SK-N-SH (cell line): ENCODE measurements at regions of chr1 and their contacts with region 1.

Region 1: DNA sequence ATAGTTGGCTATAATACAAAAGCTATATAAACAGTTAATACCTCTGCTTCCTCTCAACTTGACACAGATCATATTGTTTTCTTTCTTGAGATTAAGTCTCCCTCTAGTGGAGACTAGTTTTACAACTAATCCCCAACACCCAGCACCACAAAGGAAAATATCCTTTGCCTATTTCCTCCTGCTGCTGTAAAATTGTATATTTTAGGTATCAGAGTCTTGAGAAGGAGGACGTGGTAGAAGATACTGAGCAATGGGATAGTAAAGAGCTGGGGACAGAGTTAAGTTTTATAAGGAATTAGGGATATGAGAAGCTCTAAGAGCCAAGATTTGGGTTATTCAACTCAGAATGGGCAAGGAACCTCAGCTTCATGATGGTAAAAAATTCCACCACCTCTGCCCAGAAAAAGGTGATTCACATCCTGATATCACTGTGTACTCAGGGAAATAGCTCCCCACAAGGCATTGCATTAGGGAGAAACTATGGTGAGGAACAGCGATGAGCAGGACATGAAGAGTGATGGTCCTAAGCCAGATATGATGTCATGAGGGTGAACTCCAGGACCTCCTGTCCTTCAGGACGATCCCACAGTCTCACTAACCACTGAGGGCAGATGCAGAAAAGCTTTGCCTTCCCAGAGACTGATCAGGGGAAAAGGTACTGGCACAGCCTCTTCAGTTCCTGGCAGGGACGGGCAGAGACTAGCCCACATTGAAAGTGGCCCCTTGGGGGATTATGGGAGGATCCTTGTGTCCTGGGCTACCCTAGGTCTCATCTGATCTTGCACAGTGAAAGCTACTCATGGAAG is 14.7 kb upstream of the CFAP126 start:
- DNase-seq: peak; percentile 60
- H3K4me3 ChIP-seq: peak overlapping the region in 1 of 2 experiments; percentile 34; a peak in 2 of 4 replicates
- H3K27ac ChIP-seq: peak overlapping the region in 1 of 2 experiments; percentile 72; a peak in 2 of 4 replicates
- H3K4me1 ChIP-seq: no peaks in the 10 kb centered on the region; a peak in 1 of 4 replicates
- H3K27me3 ChIP-seq: no peaks in the 10 kb centered on the region
- CTCF ChIP-seq: peak; percentile 81
- EP300 ChIP-seq: no peak
- RAD21 ChIP-seq: peak; percentile 78

Region 2: DNA sequence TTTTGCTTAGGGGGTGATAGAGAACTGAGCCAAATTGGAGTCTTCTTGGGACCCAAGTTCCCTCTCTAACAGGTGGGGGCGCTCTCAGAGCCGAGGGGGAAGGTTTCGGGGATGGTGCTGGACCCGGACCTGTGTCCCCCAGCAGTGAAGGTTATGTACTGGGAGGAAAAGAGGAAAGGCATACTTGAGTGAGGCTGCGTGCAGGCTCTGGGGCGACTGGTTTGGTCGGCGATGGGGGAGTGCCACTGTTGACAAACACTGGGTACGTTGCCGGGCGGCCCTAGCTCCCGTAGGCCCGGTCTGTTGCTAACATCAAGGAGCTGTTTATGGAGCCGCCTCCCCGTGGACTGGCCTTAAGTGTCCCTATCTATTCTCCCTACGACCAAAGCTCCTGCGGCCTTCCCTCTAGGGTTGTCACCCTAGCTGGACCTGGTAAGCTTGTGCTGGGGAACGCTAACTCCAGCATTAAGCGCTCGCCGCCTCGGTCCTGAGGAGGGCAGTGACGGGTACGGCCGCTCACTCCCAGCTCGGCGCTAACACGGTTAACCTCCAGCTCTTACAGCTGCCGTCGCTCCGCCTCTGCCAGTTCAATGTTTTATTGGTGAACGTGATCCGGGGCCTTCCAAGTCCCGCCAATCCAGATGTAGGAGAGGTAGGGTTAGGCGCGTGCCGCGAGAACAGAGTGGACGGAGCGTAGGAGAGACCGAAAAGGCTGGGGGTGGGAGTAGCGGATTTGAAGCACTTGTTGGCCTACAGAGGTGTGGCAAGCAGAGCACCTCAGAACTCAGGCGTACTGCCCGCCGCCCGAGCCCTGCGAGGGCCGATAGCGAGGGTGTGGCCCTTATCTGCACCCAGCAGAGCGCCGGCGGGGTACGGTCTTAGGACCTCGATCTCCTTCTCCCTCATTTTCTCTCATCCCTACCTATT is 216.4 kb before region 1 on chr1 and contains the start of gene PPOX:
- CTCF ChIA-PET with region 1: interaction called, 10 read pairs
- POLR2A ChIA-PET with region 1: no interaction called
- DNase-seq: peak; percentile 90
- H3K4me3 ChIP-seq: peak within 1 kb of the TSS; percentile 80 to 90
- H3K27ac ChIP-seq: peak within 1 kb of the TSS; percentile 86 to 88
- H3K4me1 ChIP-seq: peaks cover 0 to 26% of the 10 kb centered on the region in 2 experiments; a peak in 1 of 4 replicates
- H3K27me3 ChIP-seq: no peaks in the 10 kb centered on the region
- CTCF ChIP-seq: peak; percentile 75
- EP300 ChIP-seq: no peak
- RAD21 ChIP-seq: no peak
- polyA plus RNA-seq, gene PPOX: 30.7 and 47.3 TPM in 2 replicates

Region 3: DNA sequence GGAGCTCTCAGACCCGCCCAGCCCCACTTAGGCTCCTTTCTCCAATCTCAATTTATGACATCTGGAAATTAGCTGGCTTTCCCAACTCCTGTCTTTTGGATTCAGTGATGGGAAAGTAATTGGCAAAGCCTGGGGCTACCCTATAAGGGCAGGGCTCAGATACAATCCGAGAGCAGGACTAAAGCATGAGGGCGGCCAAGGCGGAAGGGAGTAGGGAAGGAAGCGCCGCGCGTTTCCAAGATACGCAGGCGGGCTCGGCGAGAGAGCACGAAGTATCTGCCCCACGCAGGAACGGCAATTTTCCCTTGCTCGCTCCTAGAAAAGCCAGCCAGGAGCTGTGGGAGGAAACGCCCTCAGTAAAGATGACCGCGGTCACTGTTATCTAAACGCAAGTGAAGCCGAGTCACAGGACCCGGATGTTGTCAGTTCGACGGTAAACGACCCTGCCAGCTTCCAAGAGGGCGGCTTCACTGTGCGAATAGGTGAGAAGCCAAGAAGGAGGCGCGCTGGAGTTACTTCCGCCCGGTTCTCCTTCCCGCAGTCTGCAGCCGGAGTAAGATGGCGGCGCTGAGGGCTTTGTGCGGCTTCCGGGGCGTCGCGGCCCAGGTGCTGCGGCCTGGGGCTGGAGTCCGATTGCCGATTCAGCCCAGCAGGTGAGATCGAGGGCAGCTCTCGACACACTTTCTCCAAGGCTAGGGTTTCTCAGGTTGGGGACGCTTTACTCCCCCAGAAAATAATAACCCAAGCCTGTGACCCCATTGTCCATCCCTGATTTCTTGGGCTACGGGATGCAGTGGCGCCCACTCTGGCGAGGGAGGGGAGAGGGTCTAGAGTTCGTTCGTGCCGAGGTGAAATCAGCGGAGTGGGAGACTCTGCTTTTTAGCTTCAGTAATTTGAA is 180.3 kb before region 1 on chr1 and contains the start of gene NDUFS2:
- CTCF ChIA-PET with region 1: interaction called, 19 read pairs
- POLR2A ChIA-PET with region 1: no interaction called
- DNase-seq: peak; percentile 85
- H3K4me3 ChIP-seq: peak within 1 kb of the TSS; percentile 78 to 83
- H3K27ac ChIP-seq: peak within 1 kb of the TSS; percentile 74 to 99
- H3K4me1 ChIP-seq: peaks cover 27 to 56% of the 10 kb centered on the region in 2 experiments
- H3K27me3 ChIP-seq: no peaks in the 10 kb centered on the region
- CTCF ChIP-seq: peak; percentile 49
- EP300 ChIP-seq: no peak
- RAD21 ChIP-seq: no peak
- polyA plus RNA-seq, gene NDUFS2: 203 and 210 TPM in 2 replicates

Region 4: GRCh38 chr1:161216945-161217712 is 165.3 kb before region 1 on chr1:
- CTCF ChIA-PET with region 1: interaction called, 78 read pairs
- POLR2A ChIA-PET with region 1: no interaction called
- DNase-seq: no peak
- H3K4me3 ChIP-seq: no peak overlapping the region
- H3K27ac ChIP-seq: peak overlapping the region in 1 of 2 experiments; percentile 43; a peak in 2 of 4 replicates
- H3K4me1 ChIP-seq: no peaks in the 10 kb centered on the region; a peak in 1 of 4 replicates
- H3K27me3 ChIP-seq: no peaks in the 10 kb centered on the region
- CTCF ChIP-seq: no peak
- EP300 ChIP-seq: no peak
- RAD21 ChIP-seq: no peak

Region 5: DNA sequence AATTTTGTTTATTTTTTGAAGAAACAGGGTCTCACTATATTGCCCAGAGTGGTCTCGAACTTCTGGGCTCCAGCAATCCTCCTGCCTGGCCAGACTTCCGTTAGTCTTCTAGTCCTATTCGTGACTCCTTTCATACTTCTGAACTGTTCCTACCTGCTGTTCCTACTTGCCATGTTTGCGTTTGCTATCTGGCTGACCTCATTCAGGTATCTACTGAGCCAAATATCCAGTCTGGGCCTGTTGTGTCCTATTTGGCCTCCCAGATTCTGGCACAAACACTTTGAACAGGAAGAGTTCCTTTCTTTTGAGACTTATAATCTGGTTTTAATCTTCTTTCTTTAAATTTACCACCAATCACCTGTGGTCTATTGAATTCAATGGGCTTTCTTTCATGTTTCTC is 137.5 kb before region 1 on chr1:
- CTCF ChIA-PET with region 1: interaction called, 11 read pairs
- POLR2A ChIA-PET with region 1: no interaction called
- DNase-seq: no peak
- H3K4me3 ChIP-seq: no peak overlapping the region
- H3K27ac ChIP-seq: no peak overlapping the region
- H3K4me1 ChIP-seq: no peaks in the 10 kb centered on the region
- H3K27me3 ChIP-seq: no peaks in the 10 kb centered on the region; the same call in 1 of the 2 replicates
- CTCF ChIP-seq: no peak
- EP300 ChIP-seq: no peak
- RAD21 ChIP-seq: no peak

Region 6: DNA sequence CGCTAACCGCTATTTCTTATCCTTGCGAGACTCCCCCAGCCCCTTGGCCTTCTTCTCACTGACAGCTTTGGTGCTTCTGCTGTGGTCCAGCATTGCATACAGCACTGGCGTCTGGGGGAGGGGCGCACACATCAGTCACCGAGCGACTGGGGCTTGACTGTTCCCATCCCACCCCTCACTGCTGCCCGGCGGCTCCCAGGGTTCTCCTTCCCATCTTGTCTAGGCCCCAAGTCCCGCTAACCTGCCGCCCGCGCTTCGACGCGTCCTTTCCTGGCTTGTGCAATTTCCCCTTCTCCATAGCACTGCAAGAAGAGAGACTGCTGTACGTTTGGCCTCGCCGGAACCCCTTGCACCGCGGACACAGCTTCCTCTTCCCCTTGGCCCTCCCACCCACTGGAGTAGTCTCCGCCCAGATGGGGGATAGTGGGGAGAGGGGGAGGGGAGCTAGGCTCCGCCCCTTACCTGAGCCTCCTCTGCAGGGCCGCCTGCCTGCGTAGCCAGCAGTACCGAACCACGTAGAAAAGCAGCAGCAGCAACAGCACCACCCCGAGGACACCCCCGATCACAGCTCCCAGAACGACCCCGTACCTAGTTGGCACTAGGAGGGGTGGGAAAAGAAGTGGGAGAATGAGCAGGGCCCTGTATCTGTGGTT is 76.4 kb before region 1 on chr1:
- CTCF ChIA-PET with region 1: interaction called, 14 read pairs
- POLR2A ChIA-PET with region 1: no interaction called
- DNase-seq: peak; percentile 91
- H3K4me3 ChIP-seq: peak overlapping the region; percentile 71 to 79
- H3K27ac ChIP-seq: 0 out of 4 replicates have a peak overlapping the region, but pooled peaks of 1 of the 2 experiments have one; percentile 8
- H3K4me1 ChIP-seq: peaks cover 0 to 11% of the 10 kb centered on the region in 2 experiments; a peak in 2 of 4 replicates
- H3K27me3 ChIP-seq: no peaks in the 10 kb centered on the region
- CTCF ChIP-seq: peak; percentile 29
- EP300 ChIP-seq: no peak
- RAD21 ChIP-seq: peak; percentile 32

Region 7: DNA sequence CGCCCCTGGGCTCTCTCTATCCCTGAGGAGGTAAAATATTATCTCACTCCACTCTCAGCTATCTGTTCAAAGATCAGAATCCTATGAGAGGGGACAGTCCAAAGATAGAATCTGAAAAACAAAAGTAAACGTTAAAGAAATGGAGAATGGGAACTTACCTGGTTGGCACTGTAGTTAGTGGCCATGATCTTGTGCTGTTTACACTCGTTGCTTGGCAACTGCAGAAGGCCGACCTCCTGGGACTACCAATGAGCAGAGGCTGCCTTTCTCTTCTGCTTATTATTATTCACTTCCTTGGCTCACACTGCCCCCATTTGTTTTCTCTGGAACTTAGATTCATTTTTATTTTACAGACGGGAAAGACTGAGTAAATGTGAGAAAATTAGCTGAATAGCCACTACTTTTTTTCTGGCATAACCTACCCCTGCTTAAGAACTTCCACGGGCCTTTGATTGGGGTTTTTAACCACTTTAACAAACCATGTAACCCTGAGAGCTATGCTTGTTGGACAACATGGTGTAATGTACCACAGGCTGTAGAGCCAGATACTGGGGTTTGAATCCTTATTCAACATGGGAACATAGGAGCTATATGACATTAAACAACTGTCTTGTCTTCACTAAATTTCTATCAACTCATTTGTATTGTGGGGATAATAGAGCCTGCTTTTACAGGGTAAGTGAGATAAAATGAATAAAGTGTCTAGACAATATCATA is 14.6 kb before region 1 on chr1 and contains the start of gene CFAP126:
- CTCF ChIA-PET with region 1: interaction called, 22 read pairs
- POLR2A ChIA-PET with region 1: no interaction called
- DNase-seq: peak; percentile 57
- H3K4me3 ChIP-seq: no peak within 1 kb of the TSS
- H3K27ac ChIP-seq: peak within 1 kb of the TSS in 1 of 2 experiments; percentile 53; a peak in 2 of 4 replicates
- H3K4me1 ChIP-seq: 0 out of 4 replicates have a peak, but pooled peaks cover 0 to 2% of the 10 kb centered on the region in 2 experiments
- H3K27me3 ChIP-seq: no peaks in the 10 kb centered on the region
- CTCF ChIP-seq: peak; percentile 41
- EP300 ChIP-seq: no peak
- RAD21 ChIP-seq: peak; percentile 50
- polyA plus RNA-seq, gene CFAP126: not detected in 2 replicates

Region 8: DNA sequence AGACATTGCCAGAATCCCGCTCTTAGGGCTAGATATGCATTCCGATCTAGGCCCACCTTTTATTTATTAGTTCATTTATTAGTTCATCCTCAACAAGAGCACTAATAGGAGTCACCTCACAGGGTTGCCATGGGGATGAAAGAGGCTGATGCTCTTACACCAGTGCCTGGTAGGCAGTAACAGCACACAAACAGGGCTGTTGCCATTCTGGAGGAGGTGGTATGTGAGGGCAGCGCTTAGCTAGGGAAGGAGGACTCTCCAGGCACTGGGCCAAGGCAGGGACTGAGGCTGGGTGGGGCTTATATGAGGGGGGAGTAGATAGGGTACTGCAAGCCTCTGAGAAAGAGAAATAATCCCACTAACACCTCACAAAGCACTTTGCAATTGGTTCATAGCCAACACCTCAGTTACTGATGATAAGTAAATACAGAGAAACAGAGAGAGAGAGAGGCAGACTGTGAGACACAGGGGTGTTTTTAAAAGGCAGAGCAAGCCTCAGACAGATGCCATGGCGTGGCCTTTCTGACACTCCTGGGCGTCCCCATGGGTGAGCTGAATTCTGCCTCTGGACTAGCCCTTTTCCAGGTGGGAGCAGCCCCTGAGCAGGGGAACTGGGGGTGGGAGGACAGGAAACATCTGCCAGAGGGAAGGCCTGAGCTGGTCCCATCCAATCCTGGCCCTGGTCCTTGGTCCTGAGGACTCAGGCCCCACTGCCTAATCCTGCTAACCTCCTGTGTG is 128.8 kb after region 1 on chr1:
- CTCF ChIA-PET with region 1: no interaction called
- POLR2A ChIA-PET with region 1: no interaction called
- DNase-seq: no peak
- H3K4me3 ChIP-seq: no peak overlapping the region
- H3K27ac ChIP-seq: no peak overlapping the region
- H3K4me1 ChIP-seq: no peaks in the 10 kb centered on the region; a peak in 1 of 4 replicates
- H3K27me3 ChIP-seq: no peaks in the 10 kb centered on the region
- CTCF ChIP-seq: no peak
- EP300 ChIP-seq: no peak
- RAD21 ChIP-seq: no peak